Endothelial cell of umbilical vein (primary cell): ENCODE measurements at regions of chr15 and their contacts with region 1.

Region 1: DNA sequence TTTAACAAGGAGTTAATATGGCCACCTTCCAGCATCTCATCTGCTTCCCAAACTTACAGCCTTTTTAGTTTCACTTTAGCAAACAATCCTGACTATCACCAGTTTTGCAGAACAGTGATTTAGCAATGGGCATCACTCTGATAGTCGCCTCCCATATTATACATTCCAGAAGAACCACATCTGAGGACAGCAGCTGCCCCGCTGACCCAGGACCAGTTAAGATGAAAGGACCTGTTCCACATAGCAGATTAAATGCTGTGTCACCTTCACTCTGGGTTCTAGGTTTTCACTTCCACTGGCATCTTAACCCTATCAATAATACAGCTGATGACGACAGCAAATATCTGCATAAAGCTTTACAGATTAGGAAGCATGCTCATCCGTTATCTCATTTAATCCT is 99.8 kb downstream of the TRIM69 start:
- DNase-seq: no peak
- H3K4me3 ChIP-seq: no peak overlapping the region
- H3K27ac ChIP-seq: no peak overlapping the region
- H3K4me1 ChIP-seq: peaks cover 13% of the 10 kb centered on the region
- H3K27me3 ChIP-seq: no peaks in the 10 kb centered on the region
- CTCF ChIP-seq: no peak
- POLR2A ChIP-seq: no peak

Region 2: DNA sequence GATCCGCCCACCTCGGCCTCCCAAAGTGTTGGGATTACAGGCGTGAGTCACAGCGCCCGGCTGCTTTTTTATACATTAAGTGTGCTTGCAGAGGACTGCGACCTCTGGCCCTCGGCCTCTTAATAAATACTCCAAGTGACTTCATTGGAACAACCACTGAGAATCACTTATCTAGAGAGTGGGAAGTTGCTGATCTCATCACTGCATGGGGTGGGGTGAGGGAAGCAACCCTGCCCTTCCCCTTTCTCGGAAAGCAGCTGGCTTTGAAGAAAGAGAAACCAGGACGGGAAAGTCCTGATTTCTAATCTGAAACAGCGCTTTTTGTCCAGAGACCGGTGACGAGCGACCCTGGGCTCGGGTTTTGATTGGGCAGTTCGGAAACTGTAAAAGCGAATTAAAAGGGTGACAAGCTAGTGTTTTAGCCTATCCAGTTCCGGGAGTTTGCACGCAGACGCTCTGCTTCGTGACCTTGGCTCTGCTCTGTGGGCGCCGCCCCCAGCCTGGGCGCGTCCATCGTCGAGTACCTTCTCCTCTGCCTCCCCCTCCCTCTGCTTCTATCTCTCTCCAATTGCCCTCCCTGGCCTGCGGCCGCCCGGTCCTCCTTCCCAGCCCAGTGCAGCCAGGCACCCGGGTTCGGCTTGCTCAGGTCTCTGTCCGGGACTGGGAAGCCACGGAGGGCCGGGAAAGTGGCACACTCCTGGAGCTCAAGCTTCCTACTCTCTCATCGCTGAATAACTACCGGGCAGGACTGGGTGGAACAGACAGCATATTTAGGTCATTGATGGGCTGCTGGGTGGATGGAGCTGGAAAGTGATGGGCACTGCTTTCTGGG is 107.3 kb before region 1 on chr15:
- CTCF ChIA-PET with region 1: no interaction called
- POLR2A ChIA-PET with region 1: no interaction called
- dilution Hi-C with region 1: no loop called
- intact Hi-C with region 1: loop called (anchors 5 kb)
- DNase-seq: peak; percentile 99
- H3K4me3 ChIP-seq: peak overlapping the region; percentile 60 to 75 (median 69)
- H3K27ac ChIP-seq: peak overlapping the region; percentile 71
- H3K4me1 ChIP-seq: peaks cover 32% of the 10 kb centered on the region
- H3K27me3 ChIP-seq: no peaks in the 10 kb centered on the region
- CTCF ChIP-seq: no peak
- POLR2A ChIP-seq: peak; percentile 71

Region 3: GRCh38 chr15:44804298-44805046 is 31.6 kb before region 1 on chr15:
- CTCF ChIA-PET with region 1: no interaction called
- POLR2A ChIA-PET with region 1: no interaction called
- dilution Hi-C with region 1: no loop called
- intact Hi-C with region 1: loop called (anchors 1 kb)
- DNase-seq: peak; percentile 94
- H3K4me3 ChIP-seq: no peak overlapping the region
- H3K27ac ChIP-seq: peak overlapping the region; percentile 82
- H3K4me1 ChIP-seq: peaks cover 18% of the 10 kb centered on the region
- H3K27me3 ChIP-seq: no peaks in the 10 kb centered on the region
- CTCF ChIP-seq: no peak
- POLR2A ChIP-seq: no peak